CD8-positive, alpha-beta memory T cell (primary cell): ENCODE measurements at regions of chr1 and their contacts with region 1.

Region 1: GRCh38 chr1:161098210-161099068 is at the start of gene KLHDC9:
- DNase-seq: peak; percentile 51 to 81 (median 64)
- H3K4me3 ChIP-seq: peak within 1 kb of the TSS; percentile 85
- H3K4me3 Mint-ChIP-seq: peak within 1 kb of the TSS; percentile 83 to 92 (median 86)
- H3K27ac ChIP-seq: peak within 1 kb of the TSS; percentile 32
- H3K27ac Mint-ChIP-seq: peak within 1 kb of the TSS; percentile 77 to 99 (median 96)
- H3K4me1 ChIP-seq: peaks cover 8% of the 10 kb centered on the region
- H3K4me1 Mint-ChIP-seq: peaks cover 17 to 26% (median 19%) of the 10 kb centered on the region in 3 donors
- H3K27me3 ChIP-seq: no peaks in the 10 kb centered on the region
- H3K27me3 Mint-ChIP-seq: peaks cover 0 to 19% of the 10 kb centered on the region in 2 donors
- total RNA-seq, gene KLHDC9: 0.42 to 0.49 TPM

Region 2: GRCh38 chr1:160997323-160998038 is 101.0 kb before region 1 on chr1:
- CTCF ChIA-PET with region 1: interaction called, 94 read pairs
- POLR2A ChIA-PET with region 1: interaction called, 4 read pairs
- DNase-seq: peak in 4 of 5 donors; percentile 14 to 67 (median 33)
- H3K4me3 ChIP-seq: no peak overlapping the region
- H3K4me3 Mint-ChIP-seq: no peak overlapping the region
- H3K27ac ChIP-seq: no peak overlapping the region
- H3K27ac Mint-ChIP-seq: peak overlapping the region in 7 of 8 donors; percentile 19 to 80 (median 47)
- H3K4me1 ChIP-seq: no peaks in the 10 kb centered on the region
- H3K4me1 Mint-ChIP-seq: peaks cover 4 to 6% (median 5%) of the 10 kb centered on the region in 3 donors
- H3K27me3 ChIP-seq: no peaks in the 10 kb centered on the region
- H3K27me3 Mint-ChIP-seq: no peaks in the 10 kb centered on the region

Region 3: GRCh38 chr1:161038523-161039153 is 59.8 kb before region 1 on chr1 and contains the start of gene TSTD1:
- CTCF ChIA-PET with region 1: interaction called, 83 read pairs
- POLR2A ChIA-PET with region 1: interaction called, 9 read pairs
- DNase-seq: peak; percentile 81 to 92 (median 90)
- H3K4me3 ChIP-seq: peak within 1 kb of the TSS; percentile 67
- H3K4me3 Mint-ChIP-seq: peak within 1 kb of the TSS; percentile 88 to 94 (median 91)
- H3K27ac ChIP-seq: peak within 1 kb of the TSS; percentile 64
- H3K27ac Mint-ChIP-seq: peak within 1 kb of the TSS; percentile 92 to 98 (median 95)
- H3K4me1 ChIP-seq: peaks cover 32% of the 10 kb centered on the region
- H3K4me1 Mint-ChIP-seq: peaks cover 23 to 59% (median 38%) of the 10 kb centered on the region in 3 donors
- H3K27me3 ChIP-seq: no peaks in the 10 kb centered on the region
- H3K27me3 Mint-ChIP-seq: no peaks in the 10 kb centered on the region
- total RNA-seq, gene TSTD1: 40.2 to 46.1 TPM

Region 4: DNA sequence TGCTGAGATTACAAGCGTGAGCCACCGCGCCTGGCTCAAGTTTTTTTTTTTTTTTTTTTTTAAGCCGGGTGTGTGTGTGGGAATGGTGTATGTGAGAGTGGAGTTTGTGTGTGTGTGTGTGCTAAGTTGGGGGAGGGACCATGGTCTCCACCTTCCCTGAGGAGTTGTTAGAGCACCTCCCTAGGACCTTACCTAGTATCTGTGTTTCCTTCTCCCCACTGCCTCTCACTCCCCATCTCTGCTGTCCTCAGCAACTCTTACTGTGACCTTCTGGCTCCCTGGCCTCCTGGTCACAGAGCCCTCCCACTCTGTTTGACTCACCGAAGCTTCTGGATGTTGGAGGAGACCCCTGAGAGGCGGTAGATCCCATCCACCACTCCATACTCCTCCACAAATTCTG is 39.1 kb before region 1 on chr1:
- CTCF ChIA-PET with region 1: interaction called, 11 read pairs
- POLR2A ChIA-PET with region 1: interaction called, 9 read pairs
- DNase-seq: no peak
- H3K4me3 ChIP-seq: no peak overlapping the region
- H3K4me3 Mint-ChIP-seq: peak overlapping the region in 3 of 7 donors; percentile 25 to 69 (median 29)
- H3K27ac ChIP-seq: no peak overlapping the region
- H3K27ac Mint-ChIP-seq: peak overlapping the region; percentile 43 to 89 (median 74)
- H3K4me1 ChIP-seq: peaks cover 55% of the 10 kb centered on the region
- H3K4me1 Mint-ChIP-seq: peaks cover 51 to 69% (median 67%) of the 10 kb centered on the region in 3 donors
- H3K27me3 ChIP-seq: no peaks in the 10 kb centered on the region
- H3K27me3 Mint-ChIP-seq: peaks cover 0 to 1% of the 10 kb centered on the region in 2 donors

Region 5: GRCh38 chr1:161085252-161085651 is 13.2 kb before region 1 on chr1:
- CTCF ChIA-PET with region 1: interaction called, 14 read pairs
- POLR2A ChIA-PET with region 1: interaction called, 3 read pairs
- DNase-seq: no peak
- H3K4me3 ChIP-seq: no peak overlapping the region
- H3K4me3 Mint-ChIP-seq: no peak overlapping the region
- H3K27ac ChIP-seq: no peak overlapping the region
- H3K27ac Mint-ChIP-seq: no peak overlapping the region
- H3K4me1 ChIP-seq: no peaks in the 10 kb centered on the region
- H3K4me1 Mint-ChIP-seq: no peaks in the 10 kb centered on the region
- H3K27me3 ChIP-seq: no peaks in the 10 kb centered on the region
- H3K27me3 Mint-ChIP-seq: peaks cover 0 to 1% of the 10 kb centered on the region in 2 donors